Gastrocnemius medialis (tissue), 4 donors: ENCODE measurements at regions of chr3 and their contacts with region 1.

Region 1: DNA sequence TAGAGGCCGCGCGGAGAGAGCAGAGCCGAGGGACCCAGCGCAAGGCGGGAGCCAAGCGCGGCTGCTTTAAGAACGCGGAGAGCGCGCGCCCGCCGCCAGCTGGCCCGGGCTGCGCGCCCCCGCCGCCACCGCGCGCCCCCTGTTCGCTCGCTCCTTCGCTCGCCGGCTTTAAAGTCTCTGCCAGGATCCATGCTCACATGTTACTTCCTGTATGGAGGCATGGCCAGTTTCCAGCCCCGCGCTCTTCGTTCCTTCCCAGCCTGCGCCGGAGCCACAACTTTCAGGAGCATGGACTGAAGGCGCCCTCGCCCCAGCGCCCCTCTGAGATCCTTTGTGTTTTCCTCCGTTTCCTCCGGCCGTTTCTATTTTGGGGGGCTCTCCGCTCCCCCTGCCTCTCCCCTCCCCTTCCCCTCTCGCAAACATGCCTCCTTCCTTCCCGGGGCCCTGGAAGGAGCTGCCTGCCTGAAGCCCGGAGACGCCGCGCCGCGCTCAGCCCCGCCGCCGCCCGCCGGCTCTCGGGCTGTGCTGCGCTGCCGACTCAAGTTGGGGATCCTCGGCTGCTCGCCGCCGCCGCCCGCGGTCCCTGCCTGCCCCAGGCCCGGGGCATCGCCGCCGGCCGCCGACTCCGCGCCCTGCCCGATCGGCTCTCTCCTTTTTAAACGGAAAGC is at the start of gene PTPRG:
- DNase-seq: peak; percentile 91
- ATAC-seq: peak; percentile 81 to 86
- H3K4me3 ChIP-seq: peak within 1 kb of the TSS; percentile 83 to 95 (median 88)
- H3K27ac ChIP-seq: peak within 1 kb of the TSS; percentile 95 to 99 (median 97)
- H3K4me1 ChIP-seq: peaks cover 10 to 17% of the 10 kb centered on the region in 2 donors
- H3K27me3 ChIP-seq: no peaks in the 10 kb centered on the region
- CTCF ChIP-seq: no peak
- POLR2A ChIP-seq: peak; percentile 86 to 90
- total RNA-seq, gene PTPRG: 21.1 to 54.2 (median 30.6) TPM

Region 2: DNA sequence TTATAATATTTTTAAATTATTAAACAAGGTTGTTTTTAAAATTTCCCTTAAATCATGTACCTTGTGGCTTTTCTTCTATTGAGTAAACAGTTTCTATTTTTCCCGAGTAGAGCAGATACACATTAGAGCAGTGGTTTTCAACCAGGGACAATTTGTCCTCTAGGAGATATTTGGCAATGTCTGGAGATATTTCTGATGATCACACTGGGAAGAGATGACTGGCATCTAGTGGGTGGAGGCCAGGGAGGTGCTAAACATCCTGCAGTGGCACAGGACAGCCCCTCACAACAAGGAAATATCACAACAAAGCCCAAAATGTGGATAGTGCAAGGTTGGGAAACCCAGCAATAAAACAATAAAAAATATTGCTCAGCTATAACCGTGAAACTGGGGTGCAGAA is 113.1 kb before region 1 on chr3:
- in situ Hi-C with region 1: no loop called
- intact Hi-C with region 1: loop called (anchors 2 kb)
- DNase-seq: peak; percentile 12 to 50
- ATAC-seq: peak; percentile 98
- H3K4me3 ChIP-seq: no peak overlapping the region
- H3K27ac ChIP-seq: peak overlapping the region; percentile 71 to 80 (median 76)
- H3K4me1 ChIP-seq: peaks cover 24 to 34% of the 10 kb centered on the region in 2 donors
- H3K27me3 ChIP-seq: no peaks in the 10 kb centered on the region
- CTCF ChIP-seq: no peak
- POLR2A ChIP-seq: no peak

Region 3: GRCh38 chr3:61505197-61505596 is 56.3 kb before region 1 on chr3:
- in situ Hi-C with region 1: no loop called
- intact Hi-C with region 1: no loop called
- DNase-seq: no peak
- ATAC-seq: no peak
- H3K4me3 ChIP-seq: no peak overlapping the region
- H3K27ac ChIP-seq: no peak overlapping the region
- H3K4me1 ChIP-seq: no peaks in the 10 kb centered on the region
- H3K27me3 ChIP-seq: no peaks in the 10 kb centered on the region
- CTCF ChIP-seq: no peak
- POLR2A ChIP-seq: no peak

Region 4: DNA sequence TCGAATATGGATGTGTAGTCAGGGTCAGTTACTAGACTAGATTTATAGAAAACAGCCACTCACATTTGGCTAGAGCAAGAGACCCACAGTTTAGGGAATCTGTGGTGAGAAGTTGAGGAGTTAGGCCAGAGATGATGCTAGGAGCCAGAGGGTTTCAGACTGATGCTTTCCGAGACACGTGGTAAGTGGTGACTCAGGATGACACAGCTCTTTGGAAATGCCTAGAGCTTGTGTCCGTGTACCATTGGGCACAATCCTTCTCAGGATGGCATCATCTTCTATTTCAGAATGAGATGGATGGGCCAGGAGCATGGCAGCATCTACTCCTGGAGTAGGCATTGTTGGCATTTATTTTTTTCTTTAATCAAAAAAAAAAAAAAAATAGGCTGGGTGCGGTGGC is 28.3 kb after region 1 on chr3:
- in situ Hi-C with region 1: no loop called
- intact Hi-C with region 1: no loop called
- DNase-seq: no peak
- ATAC-seq: peak; percentile 44 to 52
- H3K4me3 ChIP-seq: no peak overlapping the region
- H3K27ac ChIP-seq: no peak overlapping the region
- H3K4me1 ChIP-seq: peaks cover 17 to 37% of the 10 kb centered on the region in 2 donors
- H3K27me3 ChIP-seq: no peaks in the 10 kb centered on the region
- CTCF ChIP-seq: no peak
- POLR2A ChIP-seq: no peak

Region 5: GRCh38 chr3:61704807-61705206 is 143.3 kb after region 1 on chr3:
- in situ Hi-C with region 1: no loop called
- intact Hi-C with region 1: loop called (anchors 2 kb)
- DNase-seq: no peak
- ATAC-seq: no peak
- H3K4me3 ChIP-seq: no peak overlapping the region
- H3K27ac ChIP-seq: no peak overlapping the region
- H3K4me1 ChIP-seq: peaks cover under 1 to 24% of the 10 kb centered on the region in 2 donors
- H3K27me3 ChIP-seq: no peaks in the 10 kb centered on the region
- CTCF ChIP-seq: no peak
- POLR2A ChIP-seq: no peak

Region 6: DNA sequence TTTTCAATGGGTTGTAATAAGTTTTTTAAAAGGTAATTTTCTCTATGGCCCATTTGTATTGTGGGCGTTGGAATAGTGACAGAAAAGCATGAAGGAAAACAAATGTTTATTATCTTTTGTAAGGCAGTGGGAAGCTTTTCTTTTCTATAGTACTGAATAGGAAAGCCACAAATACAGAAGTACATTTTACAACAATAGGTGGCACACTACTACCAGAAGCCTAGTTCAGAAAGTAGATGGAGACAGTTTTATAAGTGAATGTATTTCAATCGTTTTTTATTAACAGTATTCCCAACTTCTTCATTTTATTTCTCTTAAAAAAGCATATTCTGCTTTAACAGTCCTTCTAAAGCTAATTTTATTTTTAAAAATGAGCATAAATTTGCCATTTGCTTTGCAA is 296.5 kb after region 1 on chr3:
- in situ Hi-C with region 1: loop called in 1 of 4 experiments (anchors 25 kb)
- intact Hi-C with region 1: loop called (anchors 5 kb)
- DNase-seq: no peak
- ATAC-seq: peak; percentile 53 to 79
- H3K4me3 ChIP-seq: no peak overlapping the region
- H3K27ac ChIP-seq: no peak overlapping the region
- H3K4me1 ChIP-seq: peaks cover 25 to 40% of the 10 kb centered on the region in 2 donors
- H3K27me3 ChIP-seq: no peaks in the 10 kb centered on the region
- CTCF ChIP-seq: peak; percentile 16 to 67 (median 60)
- POLR2A ChIP-seq: no peak

Region 7: DNA sequence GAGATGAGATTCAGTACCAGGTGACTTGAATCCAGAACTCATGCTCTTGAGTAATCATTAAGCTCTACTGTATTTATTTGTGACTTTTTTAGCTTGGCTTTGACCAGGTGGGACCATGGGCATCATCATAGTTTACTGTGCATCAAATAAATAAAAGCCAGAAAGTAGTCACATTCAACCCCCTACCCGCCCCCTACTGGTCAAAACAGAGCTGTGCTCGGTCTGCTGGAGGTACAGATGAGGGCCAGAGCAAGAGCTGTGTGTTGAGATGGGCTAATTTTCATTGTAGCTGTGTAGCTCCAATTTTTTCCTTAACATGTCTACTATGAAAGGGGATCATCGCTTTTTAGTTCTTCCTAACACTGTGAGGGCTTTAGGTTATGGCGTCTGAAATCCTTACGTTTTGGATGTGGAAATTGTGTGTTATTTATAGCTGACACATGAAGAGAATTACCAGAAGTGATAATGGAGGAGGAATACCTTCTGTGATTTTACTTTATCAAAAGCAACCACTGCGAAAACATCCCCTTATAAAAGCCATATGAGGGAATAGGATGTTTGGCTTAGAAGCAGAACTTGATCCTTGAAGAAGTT is 374.9 kb after region 1 on chr3:
- in situ Hi-C with region 1: loop called in 1 of 4 experiments (anchors 25 kb)
- intact Hi-C with region 1: no loop called
- DNase-seq: no peak
- ATAC-seq: no peak
- H3K4me3 ChIP-seq: no peak overlapping the region
- H3K27ac ChIP-seq: no peak overlapping the region
- H3K4me1 ChIP-seq: peaks cover 24 to 40% of the 10 kb centered on the region in 2 donors
- H3K27me3 ChIP-seq: no peaks in the 10 kb centered on the region
- CTCF ChIP-seq: peak in 4 of 5 experiments; percentile 17 to 43 (median 31)
- POLR2A ChIP-seq: no peak

Region 8: DNA sequence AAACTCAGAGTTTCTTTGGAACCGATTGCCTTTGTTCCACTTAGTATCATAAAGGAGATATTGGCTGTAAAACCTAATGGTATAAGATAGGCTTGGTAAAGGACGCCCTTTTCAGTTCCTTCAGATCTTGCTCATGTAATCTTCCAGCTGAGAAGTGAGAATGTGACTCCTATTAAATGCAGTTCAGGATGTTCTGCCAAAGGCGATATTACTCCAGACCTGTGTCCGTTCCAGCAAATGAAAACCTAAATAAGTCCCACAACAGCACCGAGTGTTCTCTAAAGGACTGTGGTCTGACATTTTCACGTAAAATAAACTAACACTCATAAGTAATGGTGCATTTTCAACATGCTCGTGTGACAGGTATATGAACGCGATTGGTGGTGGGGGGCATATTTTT is 535.6 kb after region 1 on chr3:
- in situ Hi-C with region 1: no loop called
- intact Hi-C with region 1: loop called (anchors 5 kb)
- DNase-seq: peak; percentile 76 to 80
- ATAC-seq: peak; percentile 87 to 88
- H3K4me3 ChIP-seq: peak overlapping the region in 3 of 4 donors; percentile 21 to 29 (median 27)
- H3K27ac ChIP-seq: peak overlapping the region; percentile 87 to 95 (median 90)
- H3K4me1 ChIP-seq: peaks cover 52 to 68% of the 10 kb centered on the region in 2 donors
- H3K27me3 ChIP-seq: no peaks in the 10 kb centered on the region
- CTCF ChIP-seq: no peak
- POLR2A ChIP-seq: peak in 1 of 2 donors; percentile 39

Region 9: GRCh38 chr3:62188681-62189383 is 627.3 kb after region 1 on chr3:
- in situ Hi-C with region 1: loop called (anchors 5 to 10 kb)
- intact Hi-C with region 1: loop called (anchors 2 kb)
- DNase-seq: peak; percentile 57 to 73
- ATAC-seq: peak; percentile 67 to 80
- H3K4me3 ChIP-seq: peak overlapping the region in 3 of 4 donors; percentile 10 to 29 (median 25)
- H3K27ac ChIP-seq: peak overlapping the region in 1 of 4 donors; percentile 41
- H3K4me1 ChIP-seq: peaks cover 11 to 12% of the 10 kb centered on the region in 2 donors
- H3K27me3 ChIP-seq: no peaks in the 10 kb centered on the region
- CTCF ChIP-seq: peak; percentile 73 to 88 (median 86)
- POLR2A ChIP-seq: no peak